ENCODE measurements at regions of chr11 and their contacts with region 1.

Region 1: DNA sequence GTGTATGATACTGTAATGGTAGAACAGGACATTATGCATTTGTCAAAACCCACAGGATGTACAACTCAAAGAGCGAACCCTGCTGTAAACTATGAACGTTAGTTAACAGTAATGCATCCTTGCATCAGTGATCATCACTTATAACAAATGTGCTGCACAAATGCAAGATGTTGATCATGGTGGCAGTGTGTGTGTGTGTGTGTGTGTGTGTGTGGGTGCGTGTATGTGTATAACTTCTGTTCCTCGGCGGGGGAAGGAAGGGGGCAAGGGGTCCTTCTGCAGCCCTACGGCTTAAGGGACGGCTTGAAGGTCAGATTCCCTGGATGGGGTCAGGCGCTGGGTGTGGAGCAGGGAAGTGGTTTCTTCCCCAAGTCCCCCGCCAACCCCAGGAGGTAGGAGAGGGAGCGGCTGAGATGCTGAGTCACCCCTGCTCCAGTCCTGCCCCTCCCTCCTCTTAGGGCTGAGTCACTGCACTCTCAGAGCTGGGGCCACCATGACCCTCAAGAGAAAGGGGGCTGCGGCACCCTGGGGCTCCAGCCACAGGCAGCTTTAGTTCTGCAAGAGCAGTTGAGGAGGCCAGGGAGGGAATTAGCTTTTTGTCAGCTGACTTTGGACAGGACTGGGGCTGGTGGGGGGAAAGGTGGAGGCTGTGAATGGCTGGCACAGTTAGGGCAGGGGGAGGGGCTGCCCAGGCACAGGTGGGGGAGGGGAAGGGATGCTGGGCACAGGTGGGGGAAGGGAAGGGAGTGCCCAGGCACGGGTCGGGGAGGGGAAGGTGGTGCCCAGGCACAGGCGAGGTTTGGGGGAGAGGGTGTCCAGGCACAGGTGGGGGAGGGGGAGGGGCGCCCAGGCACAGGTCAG is 8.8 kb upstream of the CTSD start:
- DNase-seq: peak; percentile 29 to 70 (median 37)
- H3K4me3 ChIP-seq: no peak overlapping the region
- H3K4me3 Mint-ChIP-seq: peak overlapping the region; percentile 50 to 87 (median 64)
- H3K27ac ChIP-seq: no peak overlapping the region
- H3K27ac Mint-ChIP-seq: peak overlapping the region in 6 of 7 donors; percentile 37 to 85 (median 74)
- H3K4me1 ChIP-seq: peaks cover 19% of the 10 kb centered on the region
- H3K4me1 Mint-ChIP-seq: peaks cover 8 to 23% (median 15%) of the 10 kb centered on the region in 4 donors
- H3K27me3 ChIP-seq: no peaks in the 10 kb centered on the region
- H3K27me3 Mint-ChIP-seq: no peaks in the 10 kb centered on the region

Region 2: GRCh38 chr11:1757861-1758610 is 14.5 kb before region 1 on chr11:
- CTCF ChIA-PET with region 1: interaction called, 10 read pairs
- POLR2A ChIA-PET with region 1: interaction called, 8 read pairs
- intact Hi-C with region 1: no loop called
- DNase-seq: peak in 4 of 5 donors; percentile 39 to 44 (median 42)
- H3K4me3 ChIP-seq: peak overlapping the region in 1 of 2 donors; percentile 38
- H3K4me3 Mint-ChIP-seq: peak overlapping the region; percentile 66 to 82 (median 76)
- H3K27ac ChIP-seq: peak overlapping the region; percentile 44
- H3K27ac Mint-ChIP-seq: peak overlapping the region; percentile 61 to 93 (median 83)
- H3K4me1 ChIP-seq: peaks cover 82% of the 10 kb centered on the region
- H3K4me1 Mint-ChIP-seq: peaks cover 20 to 79% (median 54%) of the 10 kb centered on the region in 4 donors
- H3K27me3 ChIP-seq: no peaks in the 10 kb centered on the region
- H3K27me3 Mint-ChIP-seq: no peaks in the 10 kb centered on the region